Dorsolateral prefrontal cortex (tissue), 120 donors: ENCODE measurements at regions of chr20 and their contacts with region 1.

Region 1: DNA sequence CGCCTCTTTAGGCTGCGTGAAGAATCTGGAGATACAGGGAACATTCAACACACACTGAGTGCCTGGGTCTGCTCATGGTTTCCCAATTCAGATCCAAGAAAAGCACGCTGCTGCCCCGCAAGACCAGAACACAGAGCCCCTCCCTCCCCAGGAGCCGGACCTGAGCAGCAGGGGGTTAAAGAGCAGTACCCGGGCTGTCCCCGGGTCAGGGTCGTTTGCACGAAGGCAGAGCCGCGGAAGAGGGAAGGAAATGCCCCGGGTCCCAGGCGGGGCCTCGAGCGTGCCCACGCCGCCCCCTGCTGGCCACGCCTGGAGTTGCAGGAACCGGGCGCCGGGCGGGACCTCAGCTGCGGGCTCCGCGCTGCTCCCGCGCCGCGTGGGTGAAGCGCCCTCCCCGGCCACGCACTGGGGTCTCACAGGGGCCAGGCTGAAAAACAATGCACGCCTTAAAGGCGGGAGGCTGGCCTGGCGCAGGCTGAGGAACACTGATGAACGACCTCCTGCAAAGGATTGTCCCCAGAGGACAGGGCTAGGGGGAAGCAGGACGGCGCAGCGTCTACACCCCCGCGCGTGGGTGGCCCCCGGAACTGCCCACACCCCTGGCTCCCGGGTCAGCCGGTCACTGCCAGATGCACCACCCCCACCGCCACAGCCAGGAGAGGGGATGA is 48.9 kb downstream of the ANKRD60 start:
- DNase-seq: peak in 7 of 10 donors; percentile 15 to 82 (median 50)
- H3K4me3 ChIP-seq: peak overlapping the region in 58 of 59 donors; percentile 3 to 64 (median 46)
- H3K27ac ChIP-seq: peak overlapping the region in 3 of 59 donors; percentile 39 to 56 (median 56)
- H3K27me3 ChIP-seq: peaks cover 0 to 8% (median 0%) of the 10 kb centered on the region in 45 donors
- CTCF ChIP-seq: peak; percentile 92 to 100 (median 99)

Region 2: GRCh38 chr20:57654363-57654997 is 525.1 kb before region 1 on chr20:
- intact Hi-C with region 1: loop called (anchors 2 kb)
- DNase-seq: peak; percentile 17 to 78 (median 36)
- H3K4me3 ChIP-seq: no peak overlapping the region
- H3K27ac ChIP-seq: peak overlapping the region in 1 of 59 donors; percentile 18
- H3K27me3 ChIP-seq: no peaks in the 10 kb centered on the region
- CTCF ChIP-seq: peak; percentile 77 to 99 (median 91)

Region 3: GRCh38 chr20:57718490-57719271 is 460.9 kb before region 1 on chr20:
- intact Hi-C with region 1: loop called in 1 of 2 experiments (anchors 10 kb)
- DNase-seq: peak; percentile 66 to 99 (median 98)
- H3K4me3 ChIP-seq: peak overlapping the region in 58 of 59 donors; percentile 11 to 71 (median 48)
- H3K27ac ChIP-seq: peak overlapping the region in 8 of 59 donors; percentile 9 to 64 (median 39)
- H3K27me3 ChIP-seq: no peaks in the 10 kb centered on the region
- CTCF ChIP-seq: peak in 7 of 56 donors; percentile 13 to 50 (median 29)

Region 4: DNA sequence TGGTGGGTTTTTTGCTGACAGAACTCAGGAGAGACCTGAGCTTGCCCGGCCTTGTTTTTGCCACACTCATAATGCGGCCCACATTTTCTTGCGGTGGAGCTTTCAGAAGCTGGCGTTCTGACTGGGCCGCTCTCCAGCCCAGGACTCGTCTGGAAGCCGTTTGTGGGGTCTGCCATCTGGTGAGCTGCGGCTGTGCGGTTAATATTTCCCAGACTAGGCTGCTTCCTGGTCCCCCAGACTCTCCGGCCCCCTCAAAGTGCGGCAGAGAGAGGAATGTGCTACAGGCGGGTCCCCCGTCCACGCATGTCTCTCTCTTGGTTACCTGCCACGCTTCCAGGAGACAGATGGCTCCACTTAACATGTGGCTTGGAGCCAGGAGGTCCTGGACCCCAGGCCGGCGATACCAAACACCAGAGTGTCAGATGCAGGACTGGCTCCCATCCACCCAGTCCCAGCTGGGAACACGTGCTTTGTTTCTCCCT is 340.9 kb before region 1 on chr20:
- intact Hi-C with region 1: no loop called
- DNase-seq: no peak
- H3K4me3 ChIP-seq: no peak overlapping the region
- H3K27ac ChIP-seq: no peak overlapping the region
- H3K27me3 ChIP-seq: peaks cover 0 to 12% (median 0%) of the 10 kb centered on the region in 45 donors
- CTCF ChIP-seq: no peak

Region 5: GRCh38 chr20:58017237-58017969 is 162.2 kb before region 1 on chr20:
- intact Hi-C with region 1: loop called in 1 of 2 experiments (anchors 10 kb)
- DNase-seq: peak in 9 of 10 donors; percentile 68 to 94 (median 87)
- H3K4me3 ChIP-seq: peak overlapping the region in 21 of 59 donors; percentile 2 to 51 (median 25)
- H3K27ac ChIP-seq: peak overlapping the region in 44 of 59 donors; percentile 6 to 80 (median 56)
- H3K27me3 ChIP-seq: no peaks in the 10 kb centered on the region
- CTCF ChIP-seq: peak in 6 of 56 donors; percentile 13 to 37 (median 30)